ENCODE measurements at regions of chr6 and their contacts with region 1.

Region 1: GRCh38 chr6:86856937-86857563 is 80.3 kb upstream of the HTR1E start:
- DNase-seq: no peak
- H3K4me3 ChIP-seq: no peak overlapping the region
- H3K27ac ChIP-seq: no peak overlapping the region
- H3K4me1 ChIP-seq: no peaks in the 10 kb centered on the region
- H3K27me3 ChIP-seq: no peaks in the 10 kb centered on the region
- CTCF ChIP-seq: peak in 3 of 4 experiments; percentile 29 to 62 (median 59)
- EP300 ChIP-seq: no peak
- POLR2A ChIP-seq: no peak

Region 2: GRCh38 chr6:85923013-85923430 is 934.0 kb before region 1 on chr6:
- intact Hi-C with region 1: loop called (anchors 10 kb)
- DNase-seq: no peak
- H3K4me3 ChIP-seq: no peak overlapping the region
- H3K27ac ChIP-seq: no peak overlapping the region
- H3K4me1 ChIP-seq: no peaks in the 10 kb centered on the region
- H3K27me3 ChIP-seq: no peaks in the 10 kb centered on the region
- CTCF ChIP-seq: peak in 3 of 4 experiments; percentile 20 to 54 (median 54)
- EP300 ChIP-seq: no peak
- POLR2A ChIP-seq: no peak